GM10248 (cell line): ENCODE measurements at regions of chr11 and their contacts with region 1.

Region 1: DNA sequence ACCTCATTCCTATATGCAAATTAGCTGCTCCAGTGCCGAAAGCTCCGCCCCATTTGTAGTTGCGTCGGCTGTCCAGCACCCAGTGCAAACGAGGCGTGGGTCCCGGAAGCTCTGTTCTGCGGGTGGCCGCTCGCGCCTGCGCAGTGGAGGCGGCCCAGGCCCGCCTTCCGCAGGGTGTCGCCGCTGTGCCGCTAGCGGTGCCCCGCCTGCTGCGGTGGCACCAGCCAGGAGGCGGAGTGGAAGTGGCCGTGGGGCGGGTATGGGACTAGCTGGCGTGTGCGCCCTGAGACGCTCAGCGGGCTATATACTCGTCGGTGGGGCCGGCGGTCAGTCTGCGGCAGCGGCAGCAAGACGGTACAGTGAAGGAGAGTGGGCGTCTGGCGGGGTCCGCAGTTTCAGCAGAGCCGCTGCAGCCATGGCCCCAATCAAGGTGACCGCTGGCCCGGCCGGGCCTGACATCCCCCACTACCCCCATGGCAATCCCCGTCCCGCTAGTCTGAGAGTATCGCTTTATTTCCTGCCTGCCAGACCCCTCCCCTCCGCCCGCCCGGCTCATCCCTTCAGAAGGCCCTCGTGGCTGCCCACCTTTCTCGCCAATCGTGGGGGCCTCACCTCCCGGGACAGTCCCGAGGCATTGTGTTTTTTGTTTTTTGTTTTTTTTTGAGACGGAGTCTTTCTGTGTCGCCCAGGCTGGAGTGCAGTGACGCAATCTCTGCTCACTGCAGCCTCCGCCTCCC is at the start of gene PRDX5:
- DNase-seq: peak; percentile 97
- CTCF ChIP-seq: peak; percentile 63

Region 2: DNA sequence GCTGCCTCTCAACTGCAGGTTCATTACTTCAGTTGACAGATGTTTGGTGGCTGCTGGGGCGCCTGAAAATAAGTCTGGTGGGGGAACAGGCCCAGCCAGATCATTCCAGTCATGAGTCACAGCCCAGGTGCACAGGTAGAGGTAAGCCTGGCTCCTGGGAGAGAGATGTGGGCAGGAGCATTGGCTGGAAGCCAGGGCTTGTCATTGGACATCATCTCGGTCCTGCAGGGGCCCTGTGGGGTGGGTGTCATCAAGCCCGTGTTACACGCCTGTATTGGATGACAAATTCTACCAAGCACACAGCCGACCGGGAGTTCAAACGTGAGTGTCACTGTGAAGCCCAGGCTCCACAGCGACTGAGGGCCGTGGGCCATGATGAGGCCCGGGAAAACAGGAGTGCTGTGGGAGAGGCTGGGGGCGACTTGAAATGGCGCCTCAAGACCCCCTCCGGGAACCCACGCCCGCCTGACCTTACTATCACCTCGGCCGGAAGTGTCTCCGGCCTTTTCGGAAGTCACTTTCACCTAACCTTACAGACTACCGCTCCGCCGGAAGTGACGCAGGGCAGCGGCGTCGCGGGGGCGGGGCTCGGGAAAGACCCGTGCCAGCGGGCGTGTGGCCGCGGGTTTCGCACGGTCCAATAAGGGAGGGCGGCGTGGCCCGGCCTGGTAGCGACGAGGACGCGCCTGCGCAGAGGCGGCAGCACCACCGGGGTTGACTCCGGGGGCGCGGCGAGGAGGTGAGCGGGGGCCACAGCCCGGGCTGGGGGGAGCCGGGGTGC is 77.5 kb before region 1 on chr11 and contains the start of gene FKBP2:
- CTCF ChIA-PET with region 1: no interaction called
- POLR2A ChIA-PET with region 1: interaction called, 12 read pairs
- DNase-seq: peak; percentile 93
- CTCF ChIP-seq: no peak

Region 3: GRCh38 chr11:64331557-64332371 is 13.6 kb after region 1 on chr11:
- CTCF ChIA-PET with region 1: interaction called, 71 read pairs
- POLR2A ChIA-PET with region 1: interaction called, 18 read pairs
- DNase-seq: peak; percentile 79
- CTCF ChIP-seq: peak; percentile 56

Region 4: DNA sequence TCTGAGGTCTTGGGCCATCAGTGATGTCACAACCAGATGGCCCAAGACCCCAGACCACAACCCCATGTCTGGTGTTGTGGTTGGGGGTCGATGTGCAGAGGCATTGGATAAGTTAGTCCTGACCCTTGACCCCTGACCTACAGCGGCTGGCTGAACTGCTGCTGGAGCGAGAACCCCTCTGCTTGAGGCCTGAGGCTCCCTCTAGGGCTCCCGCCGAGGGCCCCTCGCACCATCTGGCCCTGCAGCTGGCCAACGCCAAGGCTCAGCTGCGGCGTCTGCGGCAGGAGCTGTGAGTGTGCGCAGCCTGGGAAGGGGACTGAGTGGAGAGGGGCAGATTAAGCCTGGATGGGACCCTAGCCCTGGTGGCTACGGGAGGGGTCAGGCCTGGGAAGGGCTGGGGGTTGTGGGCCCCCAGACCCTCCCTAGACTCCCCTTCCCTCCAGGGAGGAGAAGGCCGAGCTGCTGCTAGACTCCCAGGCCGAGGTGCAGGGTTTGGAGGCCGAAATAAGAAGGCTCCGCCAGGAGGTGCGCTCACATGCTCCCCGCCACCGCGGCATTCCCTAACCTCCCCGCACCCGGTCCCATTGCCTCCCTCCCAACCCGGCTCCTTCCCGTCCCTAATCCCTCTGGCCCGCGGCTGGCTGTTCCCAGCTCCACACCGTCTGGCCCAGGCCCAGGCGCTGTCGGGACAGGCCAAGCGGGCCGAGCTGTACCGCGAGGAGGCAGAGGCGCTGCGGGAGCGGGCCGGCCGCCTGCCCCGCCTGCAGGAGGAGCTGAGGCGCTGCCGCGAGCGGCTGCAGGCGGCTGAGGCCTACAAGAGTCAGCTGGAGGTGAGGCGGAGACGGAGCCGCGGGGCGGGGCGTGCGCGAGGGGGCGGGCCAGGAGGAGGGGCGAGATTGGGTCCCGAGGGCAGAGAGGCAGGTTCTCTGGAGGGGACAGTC is 24.0 kb after region 1 on chr11:
- CTCF ChIA-PET with region 1: interaction called, 20 read pairs
- POLR2A ChIA-PET with region 1: no interaction called
- DNase-seq: peak; percentile 95
- CTCF ChIP-seq: peak; percentile 28

Region 5: GRCh38 chr11:64358907-64359711 is 41.0 kb after region 1 on chr11 and contains the start of gene RPS6KA4:
- CTCF ChIA-PET with region 1: interaction called, 43 read pairs
- POLR2A ChIA-PET with region 1: interaction called, 8 read pairs
- DNase-seq: peak; percentile 93
- CTCF ChIP-seq: no peak

Region 6: DNA sequence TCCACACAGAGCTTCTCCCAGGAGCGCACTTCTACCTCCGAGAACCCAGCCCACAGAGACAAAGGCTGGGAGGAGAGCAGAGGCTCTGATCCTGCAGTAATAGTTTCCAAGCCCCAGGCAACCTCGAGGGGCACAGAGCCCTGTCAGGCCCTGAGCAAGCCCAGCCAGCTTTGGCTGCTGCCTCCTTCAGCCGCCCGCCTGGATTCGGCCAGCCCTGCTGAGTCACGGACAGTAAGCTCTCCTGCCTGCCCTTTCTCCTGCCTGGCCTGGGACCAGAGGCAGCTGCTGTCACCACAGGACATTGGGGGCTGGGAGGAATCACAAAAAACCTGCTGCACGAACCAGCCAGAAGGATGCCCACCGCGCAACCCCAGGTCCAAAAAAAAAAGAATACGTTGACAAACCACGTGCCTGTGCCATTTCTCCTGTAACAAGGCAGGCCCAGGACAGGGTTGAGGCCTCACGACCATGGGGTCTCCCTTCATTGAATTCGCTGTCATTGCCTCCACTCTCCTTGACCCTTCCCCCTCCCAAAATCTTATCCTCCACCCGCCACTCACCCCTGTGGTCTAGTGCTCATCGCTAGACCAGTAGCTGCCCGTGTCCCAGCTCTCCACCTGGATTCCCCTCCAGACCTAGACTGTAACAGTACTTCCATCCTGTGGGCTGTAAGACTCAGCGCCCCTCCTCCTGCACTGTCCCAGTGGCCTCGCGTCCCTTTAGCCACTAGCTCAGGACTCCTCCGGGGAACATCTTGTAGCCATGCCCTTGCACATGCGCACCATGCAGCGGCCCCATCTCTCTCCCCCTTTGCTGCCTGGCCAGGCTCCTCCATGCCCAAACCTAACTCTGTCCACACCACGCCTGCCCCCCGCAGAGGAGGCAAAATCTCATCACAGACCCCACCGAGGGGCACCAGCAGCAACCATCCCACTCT is 265.4 kb after region 1 on chr11:
- CTCF ChIA-PET with region 1: no interaction called
- POLR2A ChIA-PET with region 1: no interaction called
- DNase-seq: no peak
- CTCF ChIP-seq: no peak